Caco-2 (cell line): ENCODE measurements at regions of chr13 and their contacts with region 1.

Region 1: GRCh38 chr13:80342471-80343380 is 1.8 kb upstream of the SPRY2 start:
- DNase-seq: peak; percentile 82 to 95
- H3K4me3 ChIP-seq: peak overlapping the region; percentile 84
- H3K4me3 Mint-ChIP-seq: no peak overlapping the region
- H3K27ac Mint-ChIP-seq: peak overlapping the region; percentile 91
- H3K4me1 ChIP-seq: peaks cover 21% of the 10 kb centered on the region
- H3K4me1 Mint-ChIP-seq: peaks cover 7% of the 10 kb centered on the region
- H3K27me3 ChIP-seq: no peaks in the 10 kb centered on the region
- H3K27me3 Mint-ChIP-seq: no peaks in the 10 kb centered on the region
- CTCF ChIP-seq: peak; percentile 87 to 97

Region 2: DNA sequence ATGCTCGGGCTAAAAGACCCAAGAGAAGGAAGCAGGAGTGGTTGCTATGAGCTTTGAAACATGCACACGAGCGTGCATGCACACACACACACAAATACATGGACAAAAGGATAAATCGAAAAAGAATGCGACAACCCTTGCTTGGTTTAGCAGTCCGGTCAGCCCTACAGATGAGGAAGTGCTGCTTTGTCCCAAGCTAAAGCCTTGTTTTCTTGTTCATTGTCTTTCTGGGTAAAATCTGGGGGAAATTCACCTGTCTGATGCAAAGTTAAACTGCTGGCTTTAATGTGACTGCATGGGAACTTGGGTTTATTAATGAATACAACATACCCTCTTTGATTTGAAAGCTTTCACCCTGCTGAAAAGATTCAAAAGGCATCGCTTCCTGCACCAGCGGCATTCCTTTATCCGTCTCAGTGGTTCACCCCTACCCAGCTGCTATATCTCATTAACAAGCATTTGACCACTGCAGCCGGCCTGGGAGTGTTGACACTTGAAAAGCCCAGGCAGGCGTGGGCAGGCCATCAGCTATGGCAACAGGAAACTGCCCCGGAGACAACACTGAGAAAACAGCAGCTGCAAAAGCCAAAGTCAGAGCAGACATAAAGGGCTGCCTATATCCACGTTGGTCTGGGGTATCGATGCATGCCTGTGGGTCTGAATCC is 560.1 kb before region 1 on chr13:
- CTCF ChIA-PET with region 1: interaction called, 5 read pairs
- POLR2A ChIA-PET with region 1: interaction called, 8 read pairs
- intact Hi-C with region 1: loop called (anchors 1 kb)
- DNase-seq: peak; percentile 76 to 87
- H3K4me3 ChIP-seq: no peak overlapping the region
- H3K4me3 Mint-ChIP-seq: peak overlapping the region; percentile 42
- H3K27ac Mint-ChIP-seq: peak overlapping the region; percentile 78
- H3K4me1 ChIP-seq: peaks cover 68% of the 10 kb centered on the region
- H3K4me1 Mint-ChIP-seq: peaks cover 55% of the 10 kb centered on the region
- H3K27me3 ChIP-seq: no peaks in the 10 kb centered on the region
- H3K27me3 Mint-ChIP-seq: no peaks in the 10 kb centered on the region
- CTCF ChIP-seq: no peak

Region 3: GRCh38 chr13:79973533-79973963 is 369.2 kb before region 1 on chr13:
- CTCF ChIA-PET with region 1: no interaction called
- POLR2A ChIA-PET with region 1: no interaction called
- intact Hi-C with region 1: loop called (anchors 10 kb)
- DNase-seq: peak in 1 of 2 experiments; percentile 45
- H3K4me3 ChIP-seq: no peak overlapping the region
- H3K4me3 Mint-ChIP-seq: no peak overlapping the region
- H3K27ac Mint-ChIP-seq: no peak overlapping the region
- H3K4me1 ChIP-seq: peaks cover 4% of the 10 kb centered on the region
- H3K4me1 Mint-ChIP-seq: peaks cover 5% of the 10 kb centered on the region
- H3K27me3 ChIP-seq: no peaks in the 10 kb centered on the region
- H3K27me3 Mint-ChIP-seq: no peaks in the 10 kb centered on the region
- CTCF ChIP-seq: peak; percentile 45 to 75

Region 4: GRCh38 chr13:80173224-80173623 is 169.5 kb before region 1 on chr13:
- CTCF ChIA-PET with region 1: no interaction called
- POLR2A ChIA-PET with region 1: interaction called, 12 read pairs
- intact Hi-C with region 1: no loop called
- DNase-seq: no peak
- H3K4me3 ChIP-seq: no peak overlapping the region
- H3K4me3 Mint-ChIP-seq: no peak overlapping the region
- H3K27ac Mint-ChIP-seq: no peak overlapping the region
- H3K4me1 ChIP-seq: no peaks in the 10 kb centered on the region
- H3K4me1 Mint-ChIP-seq: no peaks in the 10 kb centered on the region
- H3K27me3 ChIP-seq: no peaks in the 10 kb centered on the region
- H3K27me3 Mint-ChIP-seq: no peaks in the 10 kb centered on the region
- CTCF ChIP-seq: no peak

Region 5: GRCh38 chr13:80297094-80297493 is 45.6 kb before region 1 on chr13:
- CTCF ChIA-PET with region 1: no interaction called
- POLR2A ChIA-PET with region 1: no interaction called
- intact Hi-C with region 1: no loop called
- DNase-seq: no peak
- H3K4me3 ChIP-seq: no peak overlapping the region
- H3K4me3 Mint-ChIP-seq: no peak overlapping the region
- H3K27ac Mint-ChIP-seq: no peak overlapping the region
- H3K4me1 ChIP-seq: no peaks in the 10 kb centered on the region
- H3K4me1 Mint-ChIP-seq: no peaks in the 10 kb centered on the region
- H3K27me3 ChIP-seq: no peaks in the 10 kb centered on the region
- H3K27me3 Mint-ChIP-seq: no peaks in the 10 kb centered on the region
- CTCF ChIP-seq: no peak

Region 6: DNA sequence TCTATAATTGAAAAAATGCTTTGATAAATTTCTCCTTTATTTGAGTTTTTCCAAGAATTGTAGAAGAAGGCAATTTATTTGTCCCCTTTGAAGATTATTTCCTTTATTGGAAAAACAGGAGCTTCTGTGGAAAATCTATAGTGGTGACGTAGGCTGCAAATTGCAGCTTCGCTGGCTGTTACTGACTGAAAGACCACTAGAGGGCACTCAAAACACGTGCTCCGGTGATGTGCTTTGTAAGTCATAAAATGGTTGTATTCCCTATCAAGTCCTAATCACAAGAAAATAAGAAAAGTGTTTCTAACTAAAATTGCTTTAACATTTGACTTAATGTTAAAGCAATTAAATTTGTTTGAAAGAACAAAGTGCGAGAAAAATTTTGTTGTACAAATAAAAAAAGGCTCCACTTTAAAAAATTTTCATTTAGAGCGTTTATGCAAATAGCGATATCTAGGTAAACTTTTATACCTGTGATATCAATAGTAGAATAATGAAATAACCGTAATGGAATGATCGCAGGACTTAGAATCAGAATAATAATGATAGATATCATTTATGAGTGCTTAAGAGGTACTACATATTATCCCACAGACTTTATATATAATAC is 636.4 kb after region 1 on chr13:
- CTCF ChIA-PET with region 1: no interaction called
- POLR2A ChIA-PET with region 1: no interaction called
- intact Hi-C with region 1: no loop called
- DNase-seq: peak; percentile 67 to 69
- H3K4me3 ChIP-seq: no peak overlapping the region
- H3K4me3 Mint-ChIP-seq: no peak overlapping the region
- H3K27ac Mint-ChIP-seq: no peak overlapping the region
- H3K4me1 ChIP-seq: peaks cover 8% of the 10 kb centered on the region
- H3K4me1 Mint-ChIP-seq: no peaks in the 10 kb centered on the region
- H3K27me3 ChIP-seq: no peaks in the 10 kb centered on the region
- H3K27me3 Mint-ChIP-seq: no peaks in the 10 kb centered on the region
- CTCF ChIP-seq: peak; percentile 89 to 90

Region 7: GRCh38 chr13:81017513-81018152 is 674.9 kb after region 1 on chr13:
- CTCF ChIA-PET with region 1: no interaction called
- POLR2A ChIA-PET with region 1: no interaction called
- intact Hi-C with region 1: loop called (anchors 2 kb)
- DNase-seq: peak in 1 of 2 experiments; percentile 30
- H3K4me3 ChIP-seq: no peak overlapping the region
- H3K4me3 Mint-ChIP-seq: no peak overlapping the region
- H3K27ac Mint-ChIP-seq: no peak overlapping the region
- H3K4me1 ChIP-seq: no peaks in the 10 kb centered on the region
- H3K4me1 Mint-ChIP-seq: no peaks in the 10 kb centered on the region
- H3K27me3 ChIP-seq: no peaks in the 10 kb centered on the region
- H3K27me3 Mint-ChIP-seq: no peaks in the 10 kb centered on the region
- CTCF ChIP-seq: peak; percentile 44 to 57